ENCODE measurements at regions of chr12 and their contacts with region 1.

Region 1: DNA sequence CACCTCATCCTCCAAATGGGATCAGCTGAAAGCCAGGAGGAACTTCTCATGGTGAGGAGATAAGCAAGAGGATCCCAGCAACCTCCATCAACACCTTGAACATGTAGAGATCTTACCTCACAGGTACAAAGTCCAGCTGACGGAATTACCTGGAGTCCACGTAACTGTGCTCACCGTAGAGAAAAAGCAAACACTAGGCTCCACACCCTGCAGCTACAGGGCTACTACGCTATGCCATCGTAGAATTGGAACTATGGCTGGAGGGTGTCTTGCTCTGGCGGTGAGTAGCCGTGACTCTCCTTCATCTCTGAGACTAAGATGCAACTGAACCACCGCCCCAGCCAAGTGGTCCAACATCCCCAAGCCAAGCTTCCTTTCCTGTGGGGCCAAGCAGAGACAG is 50.5 kb downstream of the CRY1 start:
- DNase-seq: no peak
- H3K4me3 ChIP-seq: no peak overlapping the region
- H3K27ac ChIP-seq: no peak overlapping the region
- H3K4me1 ChIP-seq: no peaks in the 10 kb centered on the region
- H3K27me3 ChIP-seq: no peaks in the 10 kb centered on the region
- CTCF ChIP-seq: no peak
- POLR2A ChIP-seq: no peak

Region 2: GRCh38 chr12:107079172-107080011 is 36.6 kb after region 1 on chr12:
- intact Hi-C with region 1: loop called (anchors 5 kb)
- DNase-seq: no peak
- H3K4me3 ChIP-seq: no peak overlapping the region
- H3K27ac ChIP-seq: no peak overlapping the region
- H3K4me1 ChIP-seq: no peaks in the 10 kb centered on the region
- H3K27me3 ChIP-seq: no peaks in the 10 kb centered on the region
- CTCF ChIP-seq: peak in 1 of 3 donors; percentile 18
- POLR2A ChIP-seq: no peak